ENCODE measurements at regions of chr20 and their contacts with region 1.

Region 1: DNA sequence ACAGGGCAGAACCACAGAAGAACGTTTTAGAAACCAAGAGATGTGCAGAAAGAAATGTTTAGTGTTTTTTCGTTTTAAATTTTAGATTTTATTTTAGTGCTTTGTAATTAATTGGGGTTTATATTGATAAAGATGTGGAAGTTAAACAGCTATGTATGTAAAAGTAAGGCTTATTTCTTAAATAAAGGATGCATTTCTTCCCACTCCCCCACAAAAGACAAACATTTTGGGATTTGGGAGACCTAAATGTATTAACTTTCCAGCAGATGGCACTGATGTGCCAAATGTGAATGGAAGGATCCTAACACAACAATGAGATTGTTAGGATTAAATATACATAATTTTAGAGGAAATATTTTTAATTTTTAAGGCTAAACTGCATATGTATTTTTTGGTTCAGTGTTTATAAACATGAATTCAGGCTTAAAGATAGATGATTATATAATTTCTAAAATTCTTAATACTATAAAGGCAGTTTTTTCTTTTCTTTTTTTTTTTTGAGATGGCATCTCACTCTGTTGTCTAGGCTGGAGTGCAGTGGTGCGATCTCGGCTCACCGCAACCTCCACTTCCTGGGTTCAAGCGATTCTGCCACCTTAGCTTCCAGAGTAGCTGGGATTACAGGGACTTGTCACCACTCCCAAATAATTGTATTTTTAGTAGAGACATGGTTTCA is 12.0 kb downstream of the PFDN4 start:
- DNase-seq: no peak
- H3K4me3 ChIP-seq: no peak overlapping the region
- H3K27me3 ChIP-seq: no peaks in the 10 kb centered on the region
- CTCF ChIP-seq: peak; percentile 61

Region 2: GRCh38 chr20:54207743-54208547 is 11.9 kb before region 1 on chr20 and contains the start of gene PFDN4:
- CTCF ChIA-PET with region 1: interaction called, 16 read pairs
- POLR2A ChIA-PET with region 1: no interaction called
- DNase-seq: no peak
- H3K4me3 ChIP-seq: peak within 1 kb of the TSS; percentile 82
- H3K27me3 ChIP-seq: peaks cover 2% of the 10 kb centered on the region; the same call in 1 of the 2 replicates
- CTCF ChIP-seq: peak; percentile 81
- polyA plus RNA-seq, gene PFDN4: 10.4 and 40.1 TPM in 2 replicates

Measured in BJ (cell line).